ENCODE measurements at regions of chr11 and their contacts with region 1.

Region 1: DNA sequence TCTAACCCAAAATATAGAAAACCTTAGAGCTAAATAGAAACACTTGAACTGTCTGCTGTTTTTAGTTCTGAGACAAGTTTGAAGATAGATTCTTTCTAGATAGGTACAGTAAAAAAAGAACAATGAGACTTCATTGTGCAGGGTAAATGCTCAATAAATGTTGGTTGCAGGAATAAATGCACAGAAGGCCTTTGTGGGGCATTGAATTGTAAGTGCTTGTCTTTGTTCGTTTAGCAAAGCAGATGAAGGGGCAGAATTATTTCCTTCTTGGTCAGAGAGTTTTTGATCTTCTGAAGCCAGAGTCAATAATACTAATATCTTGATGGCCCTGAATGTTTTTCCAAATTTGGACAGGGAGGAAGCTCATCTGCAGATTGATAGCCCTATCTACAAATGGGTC is 340.4 kb downstream of the OPCML start:
- DNase-seq: no peak
- ATAC-seq: no peak
- H3K4me3 ChIP-seq: no peak overlapping the region
- H3K4me1 ChIP-seq: no peaks in the 10 kb centered on the region
- CTCF ChIP-seq: no peak

Region 2: GRCh38 chr11:133052537-133052936 is 139.4 kb before region 1 on chr11:
- intact Hi-C with region 1: loop called in 1 of 2 experiments (anchors 5 kb)
- DNase-seq: no peak
- ATAC-seq: no peak
- H3K4me3 ChIP-seq: no peak overlapping the region
- H3K4me1 ChIP-seq: no peaks in the 10 kb centered on the region
- CTCF ChIP-seq: no peak

Region 3: GRCh38 chr11:133753150-133753549 is 561.2 kb after region 1 on chr11:
- intact Hi-C with region 1: no loop called
- DNase-seq: no peak
- ATAC-seq: no peak
- H3K4me3 ChIP-seq: no peak overlapping the region
- H3K4me1 ChIP-seq: no peaks in the 10 kb centered on the region
- CTCF ChIP-seq: no peak